ENCODE measurements at regions of chr14 and their contacts with region 1.

Region 1: GRCh38 chr14:30270200-30271161 is 288.5 kb upstream of the G2E3 start:
- DNase-seq: peak; percentile 75
- H3K4me3 Mint-ChIP-seq: no peak overlapping the region
- H3K27ac Mint-ChIP-seq: no peak overlapping the region
- H3K4me1 Mint-ChIP-seq: no peaks in the 10 kb centered on the region
- H3K27me3 Mint-ChIP-seq: peaks cover 4% of the 10 kb centered on the region

Region 2: DNA sequence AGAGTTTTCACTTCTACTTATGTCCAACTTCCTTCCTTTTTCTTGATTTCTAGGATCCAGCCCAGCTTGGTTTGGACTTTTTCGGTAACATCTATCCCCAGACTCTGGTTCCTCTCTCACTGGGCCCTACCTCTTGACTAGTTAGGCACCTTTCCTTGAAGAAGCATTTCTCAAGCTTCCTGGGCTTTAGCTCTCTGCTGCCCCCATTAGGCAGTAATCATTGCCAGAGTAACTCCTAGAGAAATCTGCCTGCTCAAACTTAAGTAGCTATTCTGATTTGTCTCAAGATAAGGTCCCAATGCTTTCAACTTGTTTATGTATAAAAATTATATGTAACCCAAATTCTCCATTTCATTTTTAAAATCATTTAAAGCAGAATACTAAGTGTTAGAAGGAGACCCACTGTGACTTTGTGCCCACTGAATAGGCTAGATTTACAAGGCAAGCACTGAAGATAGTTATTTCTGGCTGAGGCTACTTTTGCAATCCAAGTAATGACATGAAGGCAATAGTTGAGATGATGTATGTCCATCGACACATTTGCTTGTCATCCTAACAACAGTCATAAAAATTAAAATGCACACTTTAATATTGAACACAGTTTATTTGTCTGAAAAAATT is 13.5 kb after region 1 on chr14:
- CTCF ChIA-PET with region 1: interaction called, 24 read pairs
- POLR2A ChIA-PET with region 1: no interaction called
- intact Hi-C with region 1: no loop called
- DNase-seq: peak; percentile 18
- H3K4me3 Mint-ChIP-seq: no peak overlapping the region
- H3K27ac Mint-ChIP-seq: no peak overlapping the region
- H3K4me1 Mint-ChIP-seq: no peaks in the 10 kb centered on the region
- H3K27me3 Mint-ChIP-seq: peaks cover 2% of the 10 kb centered on the region

Region 3: DNA sequence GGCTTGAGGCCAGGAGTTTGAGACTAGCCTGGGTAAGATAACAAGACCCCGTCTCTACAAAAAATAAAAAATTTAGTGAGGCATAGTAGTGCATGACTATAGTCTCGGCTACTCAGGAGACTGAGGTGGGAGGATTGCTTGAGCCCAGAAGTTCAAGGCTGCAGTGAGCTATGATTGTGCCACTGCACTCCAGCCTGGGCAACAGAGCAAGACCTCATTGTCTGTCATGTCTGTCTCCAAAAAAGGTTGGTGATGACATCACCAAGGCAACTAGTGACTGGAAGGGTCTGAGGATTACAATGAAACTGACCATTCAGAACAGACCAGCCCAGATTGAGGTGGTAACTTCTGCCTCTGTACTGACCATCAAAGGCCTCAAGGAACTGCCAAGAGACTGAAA is 520.4 kb after region 1 on chr14:
- CTCF ChIA-PET with region 1: no interaction called
- POLR2A ChIA-PET with region 1: no interaction called
- intact Hi-C with region 1: no loop called
- DNase-seq: no peak
- H3K4me3 Mint-ChIP-seq: no peak overlapping the region
- H3K27ac Mint-ChIP-seq: no peak overlapping the region
- H3K4me1 Mint-ChIP-seq: no peaks in the 10 kb centered on the region
- H3K27me3 Mint-ChIP-seq: peaks cover 6% of the 10 kb centered on the region

Measured in activated CD4-positive, alpha-beta memory T cell treated with anti-CD3 and anti-CD28 coated beads for 36 hours (primary cell).